ENCODE measurements at regions of chr5 and their contacts with region 1.

Region 1: GRCh38 chr5:147558826-147559225 is 49.0 kb upstream of the DPYSL3 start:
- DNase-seq: peak; percentile 81
- ATAC-seq: peak; percentile 81
- H3K4me3 ChIP-seq: no peak overlapping the region
- H3K27ac ChIP-seq: no peak overlapping the region
- H3K4me1 ChIP-seq: no peaks in the 10 kb centered on the region
- H3K27me3 ChIP-seq: peaks cover 2% of the 10 kb centered on the region
- CTCF ChIP-seq: peak; percentile 92
- POLR2A ChIP-seq: no peak
- RAD21 ChIP-seq: peak; percentile 94

Region 2: DNA sequence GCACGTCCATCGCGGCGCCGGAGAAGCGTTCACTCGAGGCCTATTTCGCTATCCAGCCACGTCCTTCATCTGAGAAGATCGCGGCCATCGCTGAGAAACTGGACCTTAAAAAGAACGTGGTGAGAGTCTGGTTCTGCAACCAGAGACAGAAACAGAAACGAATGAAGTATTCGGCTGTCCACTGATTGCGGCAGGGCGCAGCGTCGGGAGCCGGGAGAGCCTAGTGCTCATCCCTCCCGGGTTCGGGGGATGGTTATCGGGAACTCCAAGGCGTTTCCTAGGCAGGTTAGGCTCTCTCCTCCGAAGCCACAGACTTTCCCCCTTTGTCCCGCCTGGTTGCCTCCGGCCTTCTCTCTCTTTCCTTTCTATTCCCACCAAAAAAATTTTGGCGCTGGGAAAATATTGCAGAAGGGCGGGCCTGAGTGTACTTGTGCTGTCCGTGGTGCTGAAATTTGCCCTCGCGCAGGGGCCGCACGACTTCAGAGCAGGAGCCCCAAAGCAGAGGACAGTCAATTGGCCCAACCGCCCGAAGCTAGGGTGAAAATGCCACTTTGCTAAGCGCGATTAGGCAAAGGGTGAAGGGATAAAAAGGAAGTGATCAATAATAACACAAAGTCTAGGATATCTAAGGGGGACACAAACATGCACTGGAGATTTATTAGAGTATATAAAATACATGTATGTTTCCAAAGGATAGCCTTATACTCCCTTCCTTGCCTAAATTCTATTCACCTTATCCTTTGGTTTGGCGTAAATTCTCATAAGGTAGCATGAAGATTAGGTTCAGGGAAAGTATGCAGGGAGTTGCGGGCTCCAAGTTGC is 1218.4 kb before region 1 on chr5:
- CTCF ChIA-PET with region 1: no interaction called
- POLR2A ChIA-PET with region 1: no interaction called
- dilution Hi-C with region 1: no loop called
- in situ Hi-C with region 1: no loop called
- intact Hi-C with region 1: no loop called
- DNase-seq: peak; percentile 60
- ATAC-seq: peak; percentile 80
- H3K4me3 ChIP-seq: no peak overlapping the region
- H3K27ac ChIP-seq: no peak overlapping the region
- H3K4me1 ChIP-seq: no peaks in the 10 kb centered on the region
- H3K27me3 ChIP-seq: peaks cover 93% of the 10 kb centered on the region
- CTCF ChIP-seq: no peak
- POLR2A ChIP-seq: no peak
- RAD21 ChIP-seq: no peak

Region 3: GRCh38 chr5:147391781-147392180 is 167.0 kb before region 1 on chr5:
- CTCF ChIA-PET with region 1: interaction called, 6 read pairs
- POLR2A ChIA-PET with region 1: no interaction called
- dilution Hi-C with region 1: no loop called
- in situ Hi-C with region 1: loop called (anchors 5 kb)
- intact Hi-C with region 1: no loop called
- DNase-seq: peak; percentile 84
- ATAC-seq: peak; percentile 97
- H3K4me3 ChIP-seq: no peak overlapping the region
- H3K27ac ChIP-seq: no peak overlapping the region
- H3K4me1 ChIP-seq: peaks cover 3% of the 10 kb centered on the region; the same call in 1 of the 2 replicates
- H3K27me3 ChIP-seq: no peaks in the 10 kb centered on the region
- CTCF ChIP-seq: peak; percentile 65
- POLR2A ChIP-seq: no peak
- RAD21 ChIP-seq: peak; percentile 66

Region 4: GRCh38 chr5:147403651-147404640 is 154.9 kb before region 1 on chr5:
- CTCF ChIA-PET with region 1: interaction called, 3 read pairs
- POLR2A ChIA-PET with region 1: no interaction called
- dilution Hi-C with region 1: no loop called
- in situ Hi-C with region 1: no loop called
- intact Hi-C with region 1: loop called (anchors 5 kb)
- DNase-seq: peak; percentile 99
- ATAC-seq: peak; percentile 81
- H3K4me3 ChIP-seq: peak overlapping the region; percentile 5; the same call in 1 of the 2 replicates
- H3K27ac ChIP-seq: peak overlapping the region; percentile 93
- H3K4me1 ChIP-seq: peaks cover 15% of the 10 kb centered on the region
- H3K27me3 ChIP-seq: no peaks in the 10 kb centered on the region
- CTCF ChIP-seq: no peak
- POLR2A ChIP-seq: peak; percentile 48; the same call in 1 of the 2 replicates
- RAD21 ChIP-seq: no peak; the same call in 1 of the 2 replicates

Region 5: GRCh38 chr5:147453875-147454814 is 104.7 kb before region 1 on chr5:
- CTCF ChIA-PET with region 1: interaction called, 11 read pairs
- POLR2A ChIA-PET with region 1: no interaction called
- dilution Hi-C with region 1: no loop called
- in situ Hi-C with region 1: loop called (anchors 5 kb)
- intact Hi-C with region 1: loop called (anchors 1 kb)
- DNase-seq: peak; percentile 85
- ATAC-seq: peak; percentile 89
- H3K4me3 ChIP-seq: peak overlapping the region; percentile 96
- H3K27ac ChIP-seq: peak overlapping the region; percentile 82
- H3K4me1 ChIP-seq: peaks cover 8% of the 10 kb centered on the region
- H3K27me3 ChIP-seq: no peaks in the 10 kb centered on the region; the same call in 1 of the 2 replicates
- CTCF ChIP-seq: peak; percentile 96
- POLR2A ChIP-seq: 0 out of 2 replicates have a peak, but pooled peaks have one; percentile 5
- RAD21 ChIP-seq: peak; percentile 84

Region 6: DNA sequence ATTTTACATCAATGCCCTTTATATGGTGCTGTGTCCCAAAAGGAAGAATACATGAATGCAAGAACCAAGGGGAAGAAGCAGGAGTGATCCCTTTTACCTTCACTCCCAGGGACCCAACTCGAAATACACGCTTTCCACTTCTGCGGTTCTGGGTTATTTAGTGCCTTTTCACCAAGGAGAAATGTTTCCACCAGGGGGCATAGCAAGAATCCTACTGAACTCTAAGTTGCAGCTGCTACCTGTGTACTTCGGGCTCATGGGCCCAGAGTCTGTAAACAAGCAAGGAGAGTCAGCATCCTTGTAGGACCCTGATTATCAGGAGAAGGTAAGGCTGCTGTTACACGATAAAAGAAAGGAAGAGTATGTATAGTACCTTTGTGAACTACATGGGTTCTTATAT is 94.6 kb before region 1 on chr5:
- CTCF ChIA-PET with region 1: interaction called, 7 read pairs
- POLR2A ChIA-PET with region 1: no interaction called
- dilution Hi-C with region 1: no loop called
- in situ Hi-C with region 1: no loop called
- intact Hi-C with region 1: loop called (anchors 2 kb)
- DNase-seq: peak; percentile 45
- ATAC-seq: no peak
- H3K4me3 ChIP-seq: no peak overlapping the region
- H3K27ac ChIP-seq: no peak overlapping the region
- H3K4me1 ChIP-seq: no peaks in the 10 kb centered on the region
- H3K27me3 ChIP-seq: no peaks in the 10 kb centered on the region
- CTCF ChIP-seq: peak; percentile 48
- POLR2A ChIP-seq: no peak
- RAD21 ChIP-seq: peak; percentile 50

Region 7: DNA sequence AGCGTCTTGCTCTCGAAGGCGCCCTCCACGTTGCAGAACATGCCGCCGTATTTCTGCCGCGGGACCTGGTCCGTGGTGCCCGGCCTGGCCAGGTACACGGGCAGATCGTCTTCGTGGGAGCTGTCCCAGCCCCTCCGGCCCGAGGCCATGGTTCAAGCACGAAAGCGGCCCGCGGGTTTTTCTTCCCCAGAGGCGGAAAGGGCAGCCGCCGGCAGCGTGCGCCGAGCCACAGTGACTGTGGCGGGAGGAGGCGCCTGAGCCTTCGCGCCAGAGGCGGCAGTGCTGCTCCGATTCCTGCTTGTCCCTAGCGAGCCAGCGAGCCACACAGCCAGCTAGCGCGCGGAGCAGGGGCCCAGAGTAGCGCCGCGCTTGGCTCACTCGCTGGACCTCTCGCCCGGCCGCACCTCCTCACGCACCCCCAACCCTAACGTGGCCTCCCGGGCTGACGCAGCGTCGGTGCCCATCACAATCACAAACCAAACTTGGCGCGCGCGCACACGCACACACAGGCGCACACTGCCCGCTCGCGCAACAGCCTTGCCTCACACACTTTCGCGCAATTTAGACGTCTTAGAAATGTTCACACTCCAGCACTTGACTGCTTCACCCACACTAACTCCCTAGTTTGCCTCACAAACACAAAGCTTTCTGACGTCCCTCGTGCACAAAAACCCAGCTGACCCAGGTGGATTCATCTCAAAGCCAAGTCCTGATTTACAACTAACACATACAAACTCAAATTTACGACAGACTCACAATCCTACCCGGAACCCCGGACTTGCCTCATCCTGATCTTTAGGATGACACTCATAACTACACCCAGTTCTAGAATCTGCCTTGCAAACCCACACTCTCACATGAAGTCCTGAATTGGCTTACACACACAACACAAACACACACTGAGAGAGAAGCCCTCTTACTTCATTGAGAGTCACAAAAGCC is 48.8 kb before region 1 on chr5 and contains the start of gene DPYSL3:
- CTCF ChIA-PET with region 1: interaction called, 6 read pairs
- POLR2A ChIA-PET with region 1: no interaction called
- dilution Hi-C with region 1: no loop called
- in situ Hi-C with region 1: no loop called
- intact Hi-C with region 1: loop called (anchors 1 kb)
- DNase-seq: peak; percentile 78
- ATAC-seq: peak; percentile 89
- H3K4me3 ChIP-seq: peak within 1 kb of the TSS; percentile 56
- H3K27ac ChIP-seq: peak within 1 kb of the TSS; percentile 79
- H3K4me1 ChIP-seq: peaks cover 5% of the 10 kb centered on the region
- H3K27me3 ChIP-seq: no peaks in the 10 kb centered on the region
- CTCF ChIP-seq: peak; percentile 42
- POLR2A ChIP-seq: peak; percentile 70
- RAD21 ChIP-seq: peak; percentile 58
- total RNA-seq, gene DPYSL3: 46.1 and 50.2 TPM in 2 replicates

Region 8: DNA sequence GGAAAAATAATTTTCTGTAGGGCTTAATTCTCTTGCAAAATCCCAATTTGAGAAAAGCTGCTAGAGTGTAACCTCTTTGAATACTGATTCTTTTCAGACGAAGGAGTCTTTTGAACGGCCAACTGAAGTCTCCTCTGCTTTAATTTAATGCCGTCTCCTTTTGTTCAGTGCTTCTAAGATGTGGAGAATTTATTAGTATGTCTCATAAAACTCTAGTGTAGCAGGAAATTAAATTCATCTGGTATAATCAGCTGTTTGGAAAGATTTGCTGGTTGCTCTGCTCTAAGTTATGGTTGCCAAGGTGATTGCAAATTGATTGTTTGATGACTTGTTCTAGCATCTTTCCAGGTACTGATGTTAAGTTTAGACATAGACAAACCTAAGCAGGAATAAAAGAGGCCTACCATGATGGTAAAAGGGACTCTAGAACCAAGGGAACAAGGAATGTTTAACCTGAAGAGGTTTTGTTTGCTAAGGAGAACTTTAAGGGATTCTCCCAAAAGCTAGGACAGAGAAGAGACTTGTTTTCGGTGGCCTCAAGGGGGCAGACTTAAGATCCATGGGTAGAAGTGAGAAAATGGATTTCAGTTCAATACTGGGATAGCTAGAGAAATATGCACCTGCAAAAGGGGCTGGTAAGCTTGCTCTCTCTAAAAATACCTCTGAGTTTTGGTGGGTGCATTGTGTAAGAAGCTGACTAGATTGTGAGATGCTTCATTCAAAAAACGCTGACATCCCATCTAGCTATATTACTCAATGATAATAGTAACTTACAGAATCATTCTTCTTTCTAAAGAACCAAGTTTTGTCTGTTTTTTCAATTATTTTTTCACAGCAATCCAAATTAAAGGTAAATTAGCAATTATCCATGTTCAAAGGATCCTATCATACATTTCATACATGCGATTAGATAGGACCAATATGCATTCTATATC is 1261.9 kb after region 1 on chr5:
- CTCF ChIA-PET with region 1: no interaction called
- POLR2A ChIA-PET with region 1: no interaction called
- dilution Hi-C with region 1: no loop called
- in situ Hi-C with region 1: no loop called
- intact Hi-C with region 1: no loop called
- DNase-seq: peak; percentile 50
- ATAC-seq: peak; percentile 77
- H3K4me3 ChIP-seq: no peak overlapping the region
- H3K27ac ChIP-seq: no peak overlapping the region
- H3K4me1 ChIP-seq: 0 out of 2 replicates have a peak, but pooled peaks cover 2% of the 10 kb centered on the region
- H3K27me3 ChIP-seq: no peaks in the 10 kb centered on the region; the same call in 1 of the 2 replicates
- CTCF ChIP-seq: peak; percentile 59
- POLR2A ChIP-seq: no peak
- RAD21 ChIP-seq: peak; percentile 57

Measured in IMR-90 (cell line).